T-cell (primary cell): ENCODE measurements at regions of chr19 and their contacts with region 1.

Region 1: DNA sequence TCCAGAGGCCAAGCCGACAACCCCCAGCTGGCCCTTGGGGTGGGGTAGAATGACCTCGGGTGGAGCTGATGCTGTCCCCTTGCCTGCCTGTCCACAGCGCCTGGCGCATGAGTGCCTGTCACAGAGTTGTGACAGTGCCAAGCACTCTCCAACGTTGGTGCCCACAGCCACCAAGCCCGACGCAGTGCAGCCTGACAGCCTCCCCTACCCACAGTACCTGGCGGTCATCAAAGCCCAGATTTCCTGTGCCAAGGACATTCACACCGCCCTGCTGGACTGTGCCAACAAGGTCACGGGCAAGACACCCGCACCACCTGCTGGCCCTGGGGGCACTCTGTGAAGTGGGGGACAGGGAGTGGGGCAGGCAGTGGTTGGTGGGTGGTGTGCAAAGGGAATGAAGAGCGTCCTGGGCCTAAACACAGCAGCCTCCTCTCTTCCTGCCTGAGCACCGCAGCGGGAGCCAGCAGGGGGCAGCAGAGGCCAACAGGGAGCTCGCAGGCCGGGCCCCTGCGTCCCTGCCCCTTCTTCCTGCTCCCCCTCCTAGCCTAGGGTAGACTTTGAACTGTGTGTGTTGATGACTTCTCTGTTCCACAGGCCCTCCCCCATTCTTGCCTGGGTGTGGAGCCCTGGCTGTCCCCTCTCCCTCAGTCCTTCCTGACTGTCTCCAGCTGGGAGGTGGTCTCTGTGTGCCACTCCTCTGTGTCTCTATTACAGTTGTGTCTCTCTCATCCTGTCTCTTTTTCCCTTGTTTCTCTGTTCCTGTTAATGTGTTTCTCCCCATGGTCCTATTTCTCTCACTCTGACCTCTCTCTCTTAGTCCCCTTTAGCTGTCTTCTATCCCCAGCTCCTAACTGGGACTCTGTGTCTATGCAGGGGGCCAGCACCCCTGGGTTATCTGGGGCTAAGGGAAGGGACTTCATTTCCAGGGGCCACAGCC is 6.5 kb downstream of the MED29 start:
- DNase-seq: peak; percentile 81 to 97 (median 92)
- ATAC-seq: peak; percentile 54 to 66 (median 62)
- H3K4me3 ChIP-seq: peak overlapping the region in 1 of 2 donors; percentile 0
- H3K4me3 Mint-ChIP-seq: peak overlapping the region; percentile 57 to 71 (median 69)
- H3K27ac ChIP-seq: peak overlapping the region; percentile 79
- H3K27ac Mint-ChIP-seq: peak overlapping the region; percentile 92 to 95
- H3K4me1 ChIP-seq: peaks cover 24 to 64% of the 10 kb centered on the region in 2 experiments
- H3K4me1 Mint-ChIP-seq: peaks cover 64 to 66% (median 65%) of the 10 kb centered on the region in 3 donors
- H3K27me3 ChIP-seq: no peaks in the 10 kb centered on the region
- H3K27me3 Mint-ChIP-seq: no peaks in the 10 kb centered on the region

Region 2: DNA sequence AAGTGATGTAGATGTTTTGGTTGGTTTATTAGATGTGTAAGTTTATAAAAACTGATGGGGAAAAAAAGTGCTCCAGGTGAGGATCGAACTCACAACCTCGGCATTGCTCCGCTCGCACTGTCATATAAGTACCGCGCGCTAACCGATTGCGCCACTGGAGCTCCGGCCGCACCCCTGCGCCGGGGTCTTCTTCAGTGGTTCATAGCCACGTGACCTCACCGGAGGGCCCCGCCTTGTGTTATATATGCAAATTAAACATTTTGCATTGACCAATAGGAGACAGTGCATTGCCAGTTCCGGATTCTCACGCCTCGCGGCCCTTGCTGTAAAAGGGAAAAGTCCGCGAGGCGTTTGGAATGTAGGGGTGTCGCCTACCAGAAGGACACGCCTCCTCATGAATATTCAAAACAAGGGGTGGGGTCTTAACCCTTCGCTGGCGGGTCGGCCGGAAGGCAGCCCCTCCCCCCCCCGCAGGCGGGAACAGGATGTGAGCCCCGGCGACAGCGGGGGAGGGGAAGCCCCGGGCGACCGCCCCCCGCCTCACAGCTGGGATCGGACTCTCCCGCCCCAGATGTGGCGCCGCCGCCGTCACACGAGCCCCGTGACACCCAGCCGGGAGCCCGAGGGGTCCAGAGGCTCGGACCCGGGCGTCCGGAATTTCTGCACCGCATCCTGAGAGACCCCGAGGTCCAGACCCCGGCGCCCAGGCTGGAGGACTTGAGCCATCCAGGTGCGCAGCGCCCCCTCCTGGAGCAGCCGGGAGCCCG is 14.7 kb after region 1 on chr19 and contains the start of gene PLEKHG2:
- CTCF ChIA-PET with region 1: interaction called, 6 to 29 read pairs
- POLR2A ChIA-PET with region 1: interaction called, 12 to 13 read pairs
- DNase-seq: peak; percentile 92 to 99 (median 96)
- ATAC-seq: peak; percentile 64 to 73 (median 65)
- H3K4me3 ChIP-seq: peak within 1 kb of the TSS; percentile 96 to 97
- H3K4me3 Mint-ChIP-seq: peak within 1 kb of the TSS; percentile 79 to 85 (median 83)
- H3K27ac ChIP-seq: peak within 1 kb of the TSS; percentile 100
- H3K27ac Mint-ChIP-seq: peak within 1 kb of the TSS; percentile 93 to 94
- H3K4me1 ChIP-seq: peaks cover 14 to 59% of the 10 kb centered on the region in 2 experiments
- H3K4me1 Mint-ChIP-seq: peaks cover 38 to 64% (median 44%) of the 10 kb centered on the region in 3 donors
- H3K27me3 ChIP-seq: no peaks in the 10 kb centered on the region
- H3K27me3 Mint-ChIP-seq: peaks cover 0 to 3% of the 10 kb centered on the region in 2 donors
- total RNA-seq, gene PLEKHG2: 25.2 to 88.1 (median 36.7) TPM